CD4-positive, alpha-beta memory T cell (primary cell): ENCODE measurements at regions of chr7 and their contacts with region 1.

Region 1: GRCh38 chr7:93231799-93232672 is at the start of gene VPS50:
- DNase-seq: peak; percentile 95 to 98 (median 97)
- H3K4me3 ChIP-seq: peak within 1 kb of the TSS; percentile 66 to 99
- H3K4me3 Mint-ChIP-seq: peak within 1 kb of the TSS; percentile 91 to 97 (median 95)
- H3K27ac ChIP-seq: peak within 1 kb of the TSS; percentile 86
- H3K27ac Mint-ChIP-seq: peak within 1 kb of the TSS; percentile 85 to 100 (median 98)
- H3K4me1 ChIP-seq: peaks cover 31% of the 10 kb centered on the region
- H3K4me1 Mint-ChIP-seq: peaks cover 9 to 20% (median 14%) of the 10 kb centered on the region in 4 donors
- H3K27me3 ChIP-seq: no peaks in the 10 kb centered on the region
- H3K27me3 Mint-ChIP-seq: no peaks in the 10 kb centered on the region
- total RNA-seq, gene VPS50: 35.1 to 45.8 TPM

Region 2: DNA sequence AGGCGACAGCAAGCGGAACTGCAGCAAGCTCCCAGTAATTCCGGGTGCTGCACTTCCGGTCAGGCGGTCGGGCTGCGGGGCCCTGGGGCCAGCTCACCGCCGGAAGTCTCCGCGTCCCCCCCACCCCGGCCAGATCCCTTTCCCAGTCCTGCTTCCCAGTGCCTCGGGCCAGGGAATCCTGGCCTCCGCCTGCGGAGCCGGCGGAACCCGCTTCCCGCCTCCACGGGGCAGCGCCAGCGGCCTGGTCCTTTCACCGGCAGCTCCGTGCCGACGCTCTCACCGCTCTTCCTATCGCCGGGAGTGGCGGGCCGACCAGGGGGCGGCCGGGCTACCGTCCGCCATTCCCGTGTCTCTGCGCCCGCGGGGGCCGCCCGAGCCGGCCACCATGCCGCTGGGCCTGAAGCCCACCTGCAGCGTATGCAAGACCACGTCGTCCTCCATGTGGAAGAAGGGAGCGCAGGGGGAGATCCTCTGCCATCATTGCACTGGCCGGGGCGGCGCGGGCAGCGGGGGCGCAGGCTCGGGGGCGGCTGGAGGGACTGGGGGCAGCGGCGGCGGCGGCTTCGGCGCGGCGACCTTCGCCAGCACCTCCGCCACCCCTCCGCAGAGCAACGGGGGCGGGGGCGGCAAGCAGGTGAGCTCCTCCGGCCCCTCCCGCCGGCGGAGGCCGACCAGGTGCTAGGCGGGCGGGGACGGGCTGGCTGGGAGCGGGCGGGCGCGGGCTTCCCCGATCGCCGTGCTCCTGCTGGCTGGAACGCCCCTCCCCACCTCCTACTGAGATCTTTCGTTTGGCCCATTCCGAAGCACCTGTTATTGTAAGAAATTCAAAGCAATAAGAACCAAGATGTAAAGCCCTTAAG is 784.5 kb before region 1 on chr7 and contains the start of gene GATAD1:
- CTCF ChIA-PET with region 1: interaction called, 6 read pairs
- POLR2A ChIA-PET with region 1: interaction called, 12 read pairs
- intact Hi-C with region 1: loop called (anchors 1 kb)
- DNase-seq: peak; percentile 81 to 86 (median 84)
- H3K4me3 ChIP-seq: peak within 1 kb of the TSS; percentile 68 to 74
- H3K4me3 Mint-ChIP-seq: peak within 1 kb of the TSS; percentile 92 to 98 (median 94)
- H3K27ac ChIP-seq: peak within 1 kb of the TSS; percentile 97
- H3K27ac Mint-ChIP-seq: peak within 1 kb of the TSS; percentile 98 to 99 (median 98)
- H3K4me1 ChIP-seq: peaks cover 16% of the 10 kb centered on the region
- H3K4me1 Mint-ChIP-seq: peaks cover 7 to 24% (median 13%) of the 10 kb centered on the region in 4 donors
- H3K27me3 ChIP-seq: no peaks in the 10 kb centered on the region
- H3K27me3 Mint-ChIP-seq: no peaks in the 10 kb centered on the region
- total RNA-seq, gene GATAD1: 31.9 to 34.8 TPM

Region 3: DNA sequence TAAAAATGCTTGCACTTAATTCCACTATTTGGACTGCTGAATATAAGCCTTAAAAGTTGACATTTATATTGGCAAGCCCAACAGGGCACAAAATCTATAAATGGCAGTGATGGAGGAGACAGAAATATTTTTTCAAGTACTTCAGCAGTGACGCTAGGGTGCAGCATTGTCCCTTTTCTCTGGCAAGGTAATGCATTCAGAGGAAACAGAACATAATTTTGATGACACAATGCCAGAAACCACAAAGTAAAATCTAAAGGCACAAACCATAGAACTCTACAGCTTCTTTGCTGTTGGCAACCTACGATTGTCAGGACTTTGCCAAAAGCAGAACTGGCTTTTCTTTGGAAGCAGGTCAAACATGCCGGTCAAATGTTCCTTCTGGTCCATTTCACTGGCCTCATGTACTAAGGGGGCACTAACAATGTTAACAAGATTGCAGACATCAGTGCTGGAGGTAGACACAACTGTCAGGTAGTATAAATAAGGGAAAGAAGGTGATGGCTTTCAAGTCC is 611.0 kb before region 1 on chr7:
- CTCF ChIA-PET with region 1: interaction called, 6 read pairs
- POLR2A ChIA-PET with region 1: no interaction called
- intact Hi-C with region 1: loop called (anchors 1 kb)
- DNase-seq: peak; percentile 75 to 86 (median 78)
- H3K4me3 ChIP-seq: no peak overlapping the region
- H3K4me3 Mint-ChIP-seq: peak overlapping the region in 5 of 8 donors; percentile 17 to 71 (median 36)
- H3K27ac ChIP-seq: peak overlapping the region; percentile 39
- H3K27ac Mint-ChIP-seq: peak overlapping the region; percentile 45 to 94 (median 88)
- H3K4me1 ChIP-seq: peaks cover 25% of the 10 kb centered on the region
- H3K4me1 Mint-ChIP-seq: peaks cover 19 to 40% (median 26%) of the 10 kb centered on the region in 4 donors
- H3K27me3 ChIP-seq: no peaks in the 10 kb centered on the region
- H3K27me3 Mint-ChIP-seq: no peaks in the 10 kb centered on the region

Region 4: DNA sequence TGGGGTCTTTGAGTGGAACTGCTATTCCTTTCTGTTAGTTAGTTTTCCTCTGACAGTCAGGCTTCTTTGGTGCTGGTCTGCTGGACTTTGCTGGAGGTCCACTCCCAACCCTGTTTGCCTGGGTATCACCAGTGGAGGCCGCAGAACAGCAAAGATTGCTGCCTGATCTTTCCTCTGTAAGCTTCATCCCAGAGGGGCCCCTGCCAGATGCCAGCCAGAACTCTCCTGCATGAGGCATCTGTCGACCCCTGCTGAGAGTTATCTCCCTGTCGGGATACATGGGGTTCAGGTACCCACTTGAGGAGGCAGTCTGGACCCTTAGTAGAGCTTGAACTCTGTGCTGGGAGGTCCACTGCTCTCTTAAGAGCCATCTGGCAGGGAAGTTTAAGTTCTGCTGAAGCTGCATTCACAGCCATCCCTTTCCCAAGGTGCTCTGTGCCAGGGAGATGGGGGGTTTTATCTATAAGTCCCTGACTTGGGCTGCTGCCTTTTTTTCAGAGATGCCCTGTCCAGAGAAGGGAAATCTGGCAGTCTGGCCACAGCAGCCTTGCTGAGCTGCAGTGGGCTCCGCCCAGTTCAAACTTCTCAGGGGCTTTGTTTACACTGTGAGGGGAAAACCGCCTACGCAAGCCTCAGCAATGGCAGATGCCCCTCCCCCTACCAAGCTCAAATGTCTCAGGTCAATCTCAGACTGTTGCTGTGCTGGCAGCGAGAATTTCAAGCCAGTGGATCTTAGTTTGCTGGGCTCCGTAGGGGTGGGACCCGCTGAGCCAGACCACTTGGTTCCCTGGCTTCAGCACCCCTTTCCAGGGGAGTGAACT is 305.9 kb before region 1 on chr7:
- CTCF ChIA-PET with region 1: no interaction called
- POLR2A ChIA-PET with region 1: no interaction called
- intact Hi-C with region 1: no loop called
- DNase-seq: no peak
- H3K4me3 ChIP-seq: no peak overlapping the region
- H3K4me3 Mint-ChIP-seq: no peak overlapping the region
- H3K27ac ChIP-seq: no peak overlapping the region
- H3K27ac Mint-ChIP-seq: no peak overlapping the region
- H3K4me1 ChIP-seq: no peaks in the 10 kb centered on the region
- H3K4me1 Mint-ChIP-seq: no peaks in the 10 kb centered on the region
- H3K27me3 ChIP-seq: no peaks in the 10 kb centered on the region
- H3K27me3 Mint-ChIP-seq: peaks cover 2 to 12% of the 10 kb centered on the region in 2 donors

Region 5: GRCh38 chr7:93147363-93147762 is 84.7 kb before region 1 on chr7:
- CTCF ChIA-PET with region 1: interaction called, 4 read pairs
- POLR2A ChIA-PET with region 1: interaction called, 6 read pairs
- intact Hi-C with region 1: loop called (anchors 1 kb)
- DNase-seq: peak; percentile 23 to 58 (median 41)
- H3K4me3 ChIP-seq: peak overlapping the region; percentile 44 to 59
- H3K4me3 Mint-ChIP-seq: peak overlapping the region; percentile 89 to 97 (median 92)
- H3K27ac ChIP-seq: peak overlapping the region; percentile 58
- H3K27ac Mint-ChIP-seq: peak overlapping the region; percentile 66 to 97 (median 89)
- H3K4me1 ChIP-seq: peaks cover 30% of the 10 kb centered on the region
- H3K4me1 Mint-ChIP-seq: peaks cover 29 to 41% (median 33%) of the 10 kb centered on the region in 4 donors
- H3K27me3 ChIP-seq: no peaks in the 10 kb centered on the region
- H3K27me3 Mint-ChIP-seq: no peaks in the 10 kb centered on the region

Region 6: GRCh38 chr7:93315896-93316295 is 83.9 kb after region 1 on chr7:
- CTCF ChIA-PET with region 1: no interaction called
- POLR2A ChIA-PET with region 1: no interaction called
- intact Hi-C with region 1: no loop called
- DNase-seq: no peak
- H3K4me3 ChIP-seq: no peak overlapping the region
- H3K4me3 Mint-ChIP-seq: no peak overlapping the region
- H3K27ac ChIP-seq: no peak overlapping the region
- H3K27ac Mint-ChIP-seq: no peak overlapping the region
- H3K4me1 ChIP-seq: no peaks in the 10 kb centered on the region
- H3K4me1 Mint-ChIP-seq: peaks cover 0 to 2% (median 0%) of the 10 kb centered on the region in 4 donors
- H3K27me3 ChIP-seq: no peaks in the 10 kb centered on the region
- H3K27me3 Mint-ChIP-seq: no peaks in the 10 kb centered on the region

Region 7: GRCh38 chr7:94509879-94510581 is 1278.0 kb after region 1 on chr7:
- CTCF ChIA-PET with region 1: no interaction called
- POLR2A ChIA-PET with region 1: no interaction called
- intact Hi-C with region 1: loop called (anchors 10 kb)
- DNase-seq: peak; percentile 68 to 79 (median 73)
- H3K4me3 ChIP-seq: peak overlapping the region; percentile 54 to 88
- H3K4me3 Mint-ChIP-seq: peak overlapping the region; percentile 83 to 94 (median 90)
- H3K27ac ChIP-seq: peak overlapping the region; percentile 83
- H3K27ac Mint-ChIP-seq: peak overlapping the region; percentile 71 to 94 (median 91)
- H3K4me1 ChIP-seq: peaks cover 43% of the 10 kb centered on the region
- H3K4me1 Mint-ChIP-seq: peaks cover 38 to 51% (median 45%) of the 10 kb centered on the region in 4 donors
- H3K27me3 ChIP-seq: no peaks in the 10 kb centered on the region
- H3K27me3 Mint-ChIP-seq: no peaks in the 10 kb centered on the region